CD8-positive, alpha-beta T cell (primary cell): ENCODE measurements at regions of chr3 and their contacts with region 1.

Region 1: DNA sequence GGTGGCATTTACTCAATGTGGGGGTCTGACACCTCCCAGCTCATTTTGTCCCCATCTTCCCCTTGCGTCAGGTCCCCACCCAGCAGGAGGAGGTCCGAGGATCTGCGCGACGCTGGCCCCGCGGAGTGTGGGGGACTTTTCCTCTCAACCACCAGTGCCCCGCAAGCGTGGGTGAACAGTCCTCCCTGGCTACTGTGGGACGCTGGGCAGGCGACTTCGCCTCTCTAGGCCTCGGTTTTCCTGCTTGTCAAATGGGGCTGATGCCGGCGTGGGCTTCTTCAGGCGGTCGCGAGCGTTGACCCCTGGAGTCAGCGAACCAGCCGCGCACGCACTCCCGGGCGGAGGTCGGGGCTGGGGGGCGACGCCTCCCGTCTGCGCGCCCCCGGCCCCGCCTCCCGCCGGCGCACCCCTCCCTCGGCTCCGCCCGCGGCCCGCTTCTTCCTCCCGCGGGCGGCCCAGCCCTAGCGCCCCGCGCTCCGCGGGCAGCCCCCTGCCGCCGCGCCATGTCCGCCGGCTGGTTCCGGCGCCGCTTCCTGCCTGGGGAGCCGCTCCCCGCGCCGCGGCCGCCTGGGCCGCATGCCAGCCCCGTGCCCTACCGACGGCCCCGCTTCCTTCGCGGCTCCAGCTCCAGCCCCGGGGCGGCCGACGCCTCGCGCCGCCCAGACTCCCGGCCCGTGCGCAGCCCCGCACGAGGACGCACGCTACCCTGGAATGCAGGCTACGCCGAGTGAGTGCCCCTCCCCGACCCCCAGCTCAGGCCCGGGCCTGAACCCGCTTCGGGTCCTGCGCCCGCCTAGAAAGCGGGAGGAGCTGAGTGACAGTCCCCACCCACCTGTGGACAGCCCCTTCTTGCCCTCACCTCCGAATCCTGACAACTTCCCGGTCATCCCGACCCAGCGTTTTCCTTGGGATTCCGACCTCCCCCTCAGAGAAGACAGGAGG is at the start of gene PPM1M:
- DNase-seq: peak in 8 of 9 experiments; percentile 51 to 89 (median 66)
- ATAC-seq: peak; percentile 66
- H3K4me3 ChIP-seq: peak within 1 kb of the TSS; percentile 70 to 74
- H3K4me3 Mint-ChIP-seq: peak within 1 kb of the TSS; percentile 88
- H3K27ac ChIP-seq: peak within 1 kb of the TSS; percentile 91
- H3K27ac Mint-ChIP-seq: peak within 1 kb of the TSS; percentile 96
- H3K4me1 ChIP-seq: peaks cover 84% of the 10 kb centered on the region
- H3K4me1 Mint-ChIP-seq: peaks cover 83% of the 10 kb centered on the region
- H3K27me3 ChIP-seq: no peaks in the 10 kb centered on the region
- H3K27me3 Mint-ChIP-seq: no peaks in the 10 kb centered on the region
- CTCF ChIP-seq: no peak
- total RNA-seq, gene PPM1M: 43.9 to 46.9 TPM

Region 2: DNA sequence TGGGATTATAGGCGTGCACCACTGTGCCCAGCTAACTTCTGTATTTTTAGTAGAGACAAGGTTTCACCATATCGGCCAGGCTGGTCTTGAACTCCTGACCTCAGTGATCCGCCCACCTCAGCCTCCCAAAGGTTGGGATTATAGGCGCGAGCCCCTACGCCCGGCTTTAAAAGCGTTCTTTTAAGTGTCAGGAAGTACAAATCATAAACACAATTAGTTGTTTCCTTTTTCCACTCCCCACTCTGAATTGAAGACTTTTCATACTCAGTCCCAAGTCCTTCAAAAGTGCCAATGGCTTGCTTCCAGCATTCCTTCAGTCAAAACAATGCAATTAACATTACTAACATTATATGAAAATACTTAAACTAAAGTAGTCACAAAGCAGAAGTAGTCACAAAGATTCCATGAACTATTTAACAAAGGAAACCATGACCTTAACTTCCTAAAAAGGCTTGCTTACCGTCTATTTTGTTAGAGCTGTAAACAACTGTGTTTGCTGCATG is 24.7 kb after region 1 on chr3:
- CTCF ChIA-PET with region 1: interaction called, 622 read pairs
- POLR2A ChIA-PET with region 1: interaction called, 685 read pairs
- intact Hi-C with region 1: no loop called
- DNase-seq: no peak
- ATAC-seq: no peak
- H3K4me3 ChIP-seq: peak overlapping the region in 1 of 2 experiments; percentile 10
- H3K4me3 Mint-ChIP-seq: peak overlapping the region; percentile 82
- H3K27ac ChIP-seq: peak overlapping the region; percentile 34 to 68
- H3K27ac Mint-ChIP-seq: peak overlapping the region; percentile 95
- H3K4me1 ChIP-seq: peaks cover 73% of the 10 kb centered on the region
- H3K4me1 Mint-ChIP-seq: peaks cover 86% of the 10 kb centered on the region
- H3K27me3 ChIP-seq: no peaks in the 10 kb centered on the region
- H3K27me3 Mint-ChIP-seq: no peaks in the 10 kb centered on the region
- CTCF ChIP-seq: no peak